Mucosa of descending colon (tissue), 3 donors: ENCODE measurements at regions of chr9 and their contacts with region 1.

Region 1: GRCh38 chr9:12719431-12719830 is 26.2 kb downstream of the TYRP1 start:
- DNase-seq: no peak
- ATAC-seq: peak; percentile 42
- H3K4me3 ChIP-seq: no peak overlapping the region
- H3K4me1 ChIP-seq: no peaks in the 10 kb centered on the region
- CTCF ChIP-seq: peak; percentile 8

Region 2: DNA sequence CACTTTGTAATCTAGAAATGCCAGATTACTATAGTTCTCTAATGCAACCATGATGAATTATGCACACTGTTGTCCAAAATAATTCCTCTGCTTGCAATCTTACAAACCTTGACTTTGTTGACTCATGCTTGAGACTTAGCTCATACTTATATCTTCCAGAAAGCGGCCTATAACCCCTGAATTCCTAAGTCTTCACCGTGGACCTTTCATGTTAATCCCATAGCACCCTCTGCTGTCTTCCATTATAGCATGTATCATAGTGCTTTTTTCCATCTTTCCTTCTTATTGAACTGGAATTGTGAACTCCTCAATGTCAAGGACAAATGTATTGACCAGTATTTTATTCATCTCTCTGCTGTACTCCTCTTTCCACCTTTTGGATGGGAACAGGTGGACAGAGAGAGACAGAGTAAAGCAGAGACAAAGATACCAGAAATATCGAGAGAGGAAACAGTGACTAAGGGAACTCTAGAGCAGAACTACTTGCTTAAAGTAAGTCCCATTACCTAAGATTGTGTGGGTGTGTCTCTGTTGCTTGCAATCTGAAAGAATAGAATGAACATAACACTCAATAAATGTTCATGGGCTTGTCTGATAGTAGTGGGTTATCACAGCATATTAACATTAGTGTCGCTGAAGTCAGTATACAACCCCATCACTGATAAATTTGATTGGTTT is 165.4 kb after region 1 on chr9:
- intact Hi-C with region 1: loop called (anchors 5 kb)
- DNase-seq: peak in 1 of 3 donors; percentile 48
- ATAC-seq: peak; percentile 92
- H3K4me3 ChIP-seq: no peak overlapping the region
- H3K4me1 ChIP-seq: no peaks in the 10 kb centered on the region
- CTCF ChIP-seq: peak; percentile 5

Region 3: DNA sequence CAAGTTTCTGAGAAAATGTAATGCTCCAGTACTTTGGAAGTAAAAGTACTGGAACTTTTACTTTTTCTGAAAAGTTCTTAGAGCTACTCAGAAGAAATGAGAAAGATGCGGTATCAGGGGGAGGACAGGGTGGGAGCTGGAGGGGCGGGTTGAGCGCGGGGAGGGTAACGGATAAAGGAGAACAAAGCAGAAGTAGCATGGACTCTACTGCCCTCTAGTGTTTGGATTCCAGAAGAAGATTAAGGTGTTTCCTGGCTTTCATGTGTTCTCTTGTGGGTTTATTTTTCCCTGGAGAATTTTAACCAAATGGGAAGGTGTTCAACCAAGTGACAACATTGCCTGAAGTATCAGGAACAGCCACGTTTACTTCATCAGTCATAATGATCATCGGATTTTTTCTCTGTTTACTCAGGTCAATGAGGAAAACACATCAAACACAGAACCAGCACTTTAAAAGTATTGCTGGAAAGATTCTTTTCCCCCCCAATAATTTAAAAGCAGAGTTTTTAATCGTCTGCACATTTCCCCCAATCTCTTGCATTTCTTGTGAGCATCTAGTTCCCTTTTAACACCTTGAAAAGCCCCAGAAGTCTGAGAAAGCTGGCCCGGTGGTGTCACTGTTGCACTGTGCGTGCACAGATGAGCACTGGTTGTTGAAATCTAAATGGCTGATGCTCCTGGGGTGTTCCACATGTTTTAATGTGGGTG is 369.4 kb after region 1 on chr9:
- intact Hi-C with region 1: loop called (anchors 5 kb)
- DNase-seq: peak in 2 of 3 donors; percentile 22 to 29
- ATAC-seq: no peak
- H3K4me3 ChIP-seq: no peak overlapping the region
- H3K4me1 ChIP-seq: no peaks in the 10 kb centered on the region
- CTCF ChIP-seq: no peak